Vagina (tissue), 2 donors: ENCODE measurements at regions of chr12 and their contacts with region 1.

Region 1: DNA sequence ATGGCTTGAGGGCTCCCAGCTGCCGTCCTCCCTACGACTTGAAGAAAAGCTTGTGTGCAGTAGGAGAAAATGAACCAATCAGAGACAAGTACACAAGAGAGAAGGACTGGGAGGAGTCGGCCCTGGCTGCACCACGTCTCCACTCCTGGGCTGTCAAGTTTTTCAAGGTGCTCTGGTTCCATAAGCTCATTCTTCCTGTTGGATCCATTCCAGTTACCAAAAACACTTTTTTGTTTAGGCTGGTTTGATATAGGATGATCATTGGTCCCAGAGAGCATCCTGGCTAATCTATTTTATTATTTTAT is 2.8 kb upstream of the A2ML1 start:
- DNase-seq: no peak
- H3K4me3 ChIP-seq: no peak overlapping the region
- H3K27ac ChIP-seq: no peak overlapping the region
- H3K4me1 ChIP-seq: no peaks in the 10 kb centered on the region
- H3K27me3 ChIP-seq: no peaks in the 10 kb centered on the region
- CTCF ChIP-seq: no peak
- POLR2A ChIP-seq: no peak

Region 2: DNA sequence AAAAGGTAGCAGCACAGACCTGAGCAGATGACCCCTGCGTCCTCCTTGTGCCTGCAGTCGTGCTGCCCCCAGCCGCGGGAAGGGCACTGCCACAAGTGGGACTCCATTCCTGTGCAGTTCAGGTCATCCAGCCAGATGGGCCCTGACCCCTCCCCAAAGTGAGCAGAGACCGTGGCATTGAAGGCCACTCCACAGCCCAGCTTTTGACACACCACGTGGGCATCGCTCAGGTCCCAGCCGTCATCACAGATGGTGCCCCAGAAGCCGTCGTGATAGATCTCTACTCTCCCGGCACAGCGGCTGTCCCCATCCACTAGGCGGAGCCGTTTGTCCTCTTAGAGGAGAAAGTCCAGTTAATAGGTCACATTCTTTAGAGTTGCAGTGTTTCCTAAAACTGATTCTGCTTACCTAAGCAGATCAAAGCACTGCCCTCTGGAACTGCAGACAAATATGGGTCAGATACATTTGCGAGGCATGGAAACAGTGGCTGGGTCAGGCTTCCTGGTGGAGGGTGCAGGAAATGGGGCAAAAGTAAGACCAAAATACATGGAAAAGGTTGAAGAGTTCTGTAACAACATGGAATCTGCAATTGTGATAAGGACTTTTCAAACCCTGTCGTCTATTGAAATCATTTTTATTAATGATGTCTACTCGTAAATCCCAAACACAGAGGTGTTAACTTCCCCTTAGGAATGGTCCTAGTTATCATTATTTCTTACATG is 1445.0 kb before region 1 on chr12:
- intact Hi-C with region 1: loop called (anchors 5 kb)
- DNase-seq: no peak
- H3K4me3 ChIP-seq: no peak overlapping the region
- H3K27ac ChIP-seq: no peak overlapping the region
- H3K4me1 ChIP-seq: no peaks in the 10 kb centered on the region
- H3K27me3 ChIP-seq: no peaks in the 10 kb centered on the region
- CTCF ChIP-seq: no peak
- POLR2A ChIP-seq: no peak

Region 3: DNA sequence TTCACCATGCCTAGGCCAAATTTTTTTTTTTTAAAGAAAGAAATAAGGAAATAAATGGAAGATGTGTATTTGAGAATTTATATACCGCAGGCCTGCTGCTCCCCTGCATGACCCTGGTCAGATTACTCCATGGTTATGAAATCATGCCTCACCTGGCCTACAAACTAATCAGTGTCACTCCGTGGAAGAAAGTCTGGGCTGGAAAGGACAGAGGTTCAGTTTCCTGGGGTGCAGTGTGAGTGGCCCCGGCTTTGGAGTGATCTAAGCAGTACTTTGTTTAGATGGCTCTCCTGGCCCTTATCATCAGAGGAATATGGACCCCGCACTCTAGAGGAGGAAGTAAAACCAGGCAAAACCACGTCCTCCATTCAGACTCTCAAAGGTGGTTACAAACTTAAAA is 1163.5 kb before region 1 on chr12:
- intact Hi-C with region 1: no loop called
- DNase-seq: no peak
- H3K4me3 ChIP-seq: no peak overlapping the region
- H3K27ac ChIP-seq: no peak overlapping the region
- H3K4me1 ChIP-seq: no peaks in the 10 kb centered on the region
- H3K27me3 ChIP-seq: no peaks in the 10 kb centered on the region
- CTCF ChIP-seq: no peak
- POLR2A ChIP-seq: no peak

Region 4: DNA sequence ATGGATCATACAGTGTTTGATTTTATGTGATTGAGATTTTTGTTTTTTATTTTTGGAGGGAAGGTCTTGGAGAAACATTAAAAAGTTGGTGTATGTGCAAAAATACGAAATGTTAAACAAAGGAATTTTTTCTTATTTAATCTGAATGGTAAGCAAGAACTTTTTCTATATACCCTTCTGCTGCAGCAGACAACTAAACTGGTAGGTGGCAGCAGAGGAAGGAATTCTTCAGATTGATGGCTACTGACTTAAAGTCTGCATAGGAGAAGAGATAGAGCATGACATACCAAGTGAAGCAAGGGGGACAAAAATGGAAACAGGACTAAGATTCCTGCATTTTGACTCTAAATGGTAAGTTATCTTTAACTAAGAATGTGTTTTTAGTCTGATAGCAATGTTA is 39.2 kb before region 1 on chr12:
- intact Hi-C with region 1: no loop called
- DNase-seq: no peak
- H3K4me3 ChIP-seq: no peak overlapping the region
- H3K27ac ChIP-seq: no peak overlapping the region
- H3K4me1 ChIP-seq: no peaks in the 10 kb centered on the region
- H3K27me3 ChIP-seq: no peaks in the 10 kb centered on the region
- CTCF ChIP-seq: no peak
- POLR2A ChIP-seq: no peak

Region 5: GRCh38 chr12:8969861-8970412 is 150.3 kb after region 1 on chr12:
- intact Hi-C with region 1: no loop called
- DNase-seq: no peak
- H3K4me3 ChIP-seq: no peak overlapping the region
- H3K27ac ChIP-seq: no peak overlapping the region
- H3K4me1 ChIP-seq: no peaks in the 10 kb centered on the region
- H3K27me3 ChIP-seq: no peaks in the 10 kb centered on the region
- CTCF ChIP-seq: no peak
- POLR2A ChIP-seq: no peak